ENCODE measurements at regions of chr15 and their contacts with region 1.

Region 1: GRCh38 chr15:23039151-23039916 is at the start of gene TUBGCP5:
- DNase-seq: peak; percentile 99
- H3K4me3 Mint-ChIP-seq: peak within 1 kb of the TSS; percentile 97
- H3K27ac Mint-ChIP-seq: peak within 1 kb of the TSS; percentile 92
- H3K4me1 Mint-ChIP-seq: peaks cover 26% of the 10 kb centered on the region
- H3K27me3 Mint-ChIP-seq: no peaks in the 10 kb centered on the region
- total RNA-seq, gene TUBGCP5: 13.2 TPM

Region 2: DNA sequence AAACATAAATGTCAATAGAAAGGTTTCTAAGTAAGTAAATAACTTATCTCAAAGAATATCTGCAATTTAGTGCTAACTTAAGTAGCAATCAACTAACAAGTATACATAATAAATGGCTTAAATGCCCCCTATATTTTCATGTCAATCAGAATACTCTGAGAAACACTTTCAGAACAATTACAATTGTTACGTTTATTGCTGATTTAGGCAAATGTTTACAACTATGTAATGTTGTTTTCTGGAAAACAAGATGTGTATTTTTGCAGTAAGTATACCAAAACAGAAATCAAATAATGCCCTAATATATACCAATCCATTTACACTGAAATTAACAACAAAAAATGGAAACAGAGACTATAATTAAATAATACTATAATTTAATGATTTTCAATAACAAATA is 13.1 kb before region 1 on chr15:
- CTCF ChIA-PET with region 1: interaction called, 19 read pairs
- POLR2A ChIA-PET with region 1: interaction called, 13 read pairs
- DNase-seq: no peak
- H3K4me3 Mint-ChIP-seq: no peak overlapping the region
- H3K27ac Mint-ChIP-seq: no peak overlapping the region
- H3K4me1 Mint-ChIP-seq: no peaks in the 10 kb centered on the region
- H3K27me3 Mint-ChIP-seq: no peaks in the 10 kb centered on the region

Measured in activated CD4-positive, alpha-beta memory T cell treated with anti-CD3 and anti-CD28 coated beads, Interleukin-2, amount 10 ng/mL, durations not matched to agents 7 days and 5 days (primary cell).